CD8-positive, alpha-beta T cell (primary cell): ENCODE measurements at regions of chr5 and their contacts with region 1.

Region 1: DNA sequence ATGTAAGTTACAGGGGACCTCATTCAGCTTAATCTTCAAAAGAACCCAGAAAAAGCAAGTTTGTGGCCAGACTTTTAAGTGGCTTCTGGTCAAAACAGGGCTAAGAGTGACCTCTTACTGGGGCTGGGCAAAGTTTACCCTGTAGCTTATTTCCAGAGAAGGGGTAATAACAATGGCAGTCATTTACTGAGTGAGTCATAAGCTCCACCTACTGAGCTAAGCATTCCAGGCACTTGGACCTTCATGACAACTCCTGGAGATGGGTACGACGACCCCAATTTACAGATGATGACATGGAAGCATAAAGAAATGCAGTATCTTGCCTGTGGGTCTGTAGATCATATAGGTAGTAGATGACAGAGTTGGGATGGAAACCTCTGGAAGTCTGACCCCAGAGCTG is 4.7 kb upstream of the GPR151 start:
- DNase-seq: no peak
- ATAC-seq: no peak
- H3K4me3 ChIP-seq: no peak overlapping the region
- H3K4me3 Mint-ChIP-seq: no peak overlapping the region
- H3K27ac ChIP-seq: no peak overlapping the region
- H3K27ac Mint-ChIP-seq: no peak overlapping the region
- H3K4me1 ChIP-seq: no peaks in the 10 kb centered on the region
- H3K4me1 Mint-ChIP-seq: peaks cover 2% of the 10 kb centered on the region
- H3K27me3 ChIP-seq: no peaks in the 10 kb centered on the region
- H3K27me3 Mint-ChIP-seq: peaks cover 7% of the 10 kb centered on the region
- CTCF ChIP-seq: no peak

Region 2: DNA sequence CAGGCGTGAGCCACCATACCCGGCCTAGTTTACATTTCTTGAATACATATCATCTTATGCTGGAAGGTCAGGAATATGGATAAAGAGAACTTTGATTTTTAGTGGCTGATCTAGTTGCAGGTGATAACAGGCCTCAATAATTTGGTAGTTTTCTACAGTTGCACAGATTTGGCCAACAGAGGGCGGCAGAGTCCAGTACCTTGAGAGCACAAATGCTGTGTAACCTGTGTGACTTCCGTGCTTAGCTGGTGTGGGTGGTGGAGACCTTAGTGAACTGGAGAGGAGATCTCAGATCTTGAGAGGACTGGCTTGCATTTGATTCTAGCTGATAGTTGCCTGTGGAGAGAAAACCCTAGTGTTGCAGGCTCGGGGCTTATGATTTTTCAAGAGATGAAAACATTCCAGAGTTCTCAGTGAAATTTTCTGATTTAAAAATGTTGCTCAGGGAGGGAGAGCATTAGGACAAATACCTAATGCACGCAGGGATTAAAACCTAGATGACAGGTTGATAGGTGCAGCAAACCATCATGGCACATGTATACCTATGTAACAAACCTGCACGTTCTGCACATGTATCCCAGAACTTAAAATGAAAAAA is 12.6 kb after region 1 on chr5:
- CTCF ChIA-PET with region 1: interaction called, 15 read pairs
- POLR2A ChIA-PET with region 1: interaction called, 3 read pairs
- intact Hi-C with region 1: no loop called
- DNase-seq: peak; percentile 51 to 79 (median 71)
- ATAC-seq: peak; percentile 85
- H3K4me3 ChIP-seq: no peak overlapping the region
- H3K4me3 Mint-ChIP-seq: no peak overlapping the region
- H3K27ac ChIP-seq: no peak overlapping the region
- H3K27ac Mint-ChIP-seq: no peak overlapping the region
- H3K4me1 ChIP-seq: no peaks in the 10 kb centered on the region
- H3K4me1 Mint-ChIP-seq: peaks cover 3% of the 10 kb centered on the region
- H3K27me3 ChIP-seq: no peaks in the 10 kb centered on the region
- H3K27me3 Mint-ChIP-seq: peaks cover under 1% of the 10 kb centered on the region
- CTCF ChIP-seq: peak; percentile 70

Region 3: DNA sequence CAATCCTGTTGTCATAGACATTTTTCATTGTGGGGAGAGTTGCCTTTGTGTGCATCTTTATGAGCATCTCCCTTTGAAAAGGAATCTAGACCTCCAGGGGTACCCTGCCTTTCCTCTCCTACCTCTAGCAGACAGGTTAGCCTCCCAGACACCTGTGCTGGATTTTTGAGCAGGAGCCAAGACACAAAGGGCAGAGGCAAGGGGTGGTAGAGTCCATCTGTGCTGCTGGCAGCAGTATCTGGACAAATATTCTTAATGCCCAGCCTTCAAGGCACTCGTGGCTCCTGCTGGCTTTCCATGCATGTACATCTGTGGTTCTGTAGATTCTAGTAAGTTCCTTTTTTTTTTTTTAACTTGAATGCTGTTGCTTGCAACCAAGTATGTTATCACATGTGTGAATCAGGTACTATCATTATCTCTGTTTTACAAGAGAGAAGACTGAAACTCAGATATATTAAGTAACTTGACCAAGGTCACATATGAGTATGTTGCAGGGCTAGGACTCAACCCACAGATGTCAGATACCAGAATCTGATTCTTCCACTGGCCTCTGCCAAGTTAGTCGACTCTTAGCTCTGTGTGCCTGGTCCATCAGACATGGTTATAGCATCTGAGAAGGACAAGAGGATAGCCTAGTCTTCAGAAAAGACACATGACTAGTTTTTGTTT is 28.2 kb after region 1 on chr5:
- CTCF ChIA-PET with region 1: no interaction called
- POLR2A ChIA-PET with region 1: no interaction called
- intact Hi-C with region 1: no loop called
- DNase-seq: no peak
- ATAC-seq: no peak
- H3K4me3 ChIP-seq: no peak overlapping the region
- H3K4me3 Mint-ChIP-seq: no peak overlapping the region
- H3K27ac ChIP-seq: no peak overlapping the region
- H3K27ac Mint-ChIP-seq: no peak overlapping the region
- H3K4me1 ChIP-seq: no peaks in the 10 kb centered on the region
- H3K4me1 Mint-ChIP-seq: no peaks in the 10 kb centered on the region
- H3K27me3 ChIP-seq: no peaks in the 10 kb centered on the region
- H3K27me3 Mint-ChIP-seq: peaks cover 10% of the 10 kb centered on the region
- CTCF ChIP-seq: no peak

Region 4: GRCh38 chr5:146588326-146589027 is 67.7 kb after region 1 on chr5:
- CTCF ChIA-PET with region 1: no interaction called
- POLR2A ChIA-PET with region 1: no interaction called
- intact Hi-C with region 1: no loop called
- DNase-seq: no peak
- ATAC-seq: no peak
- H3K4me3 ChIP-seq: no peak overlapping the region
- H3K4me3 Mint-ChIP-seq: no peak overlapping the region
- H3K27ac ChIP-seq: no peak overlapping the region
- H3K27ac Mint-ChIP-seq: no peak overlapping the region
- H3K4me1 ChIP-seq: no peaks in the 10 kb centered on the region
- H3K4me1 Mint-ChIP-seq: no peaks in the 10 kb centered on the region
- H3K27me3 ChIP-seq: no peaks in the 10 kb centered on the region
- H3K27me3 Mint-ChIP-seq: no peaks in the 10 kb centered on the region
- CTCF ChIP-seq: no peak